HepG2 (cell line): ENCODE measurements at regions of chr7 and their contacts with region 1.

Region 1: GRCh38 chr7:108016841-108017775 is 14.1 kb upstream of the LAMB1 start:
- DNase-seq: peak; percentile 55
- ATAC-seq: peak; percentile 72
- H3K4me3 ChIP-seq: no peak overlapping the region
- H3K27ac ChIP-seq: no peak overlapping the region
- H3K4me1 ChIP-seq: peaks cover 68% of the 10 kb centered on the region
- H3K27me3 ChIP-seq: peaks cover 0 to 7% of the 10 kb centered on the region in 2 experiments; a peak in 3 of 5 replicates
- CTCF ChIP-seq: peak; percentile 66
- EP300 ChIP-seq: no peak
- POLR2A ChIP-seq: no peak
- RAD21 ChIP-seq: no peak

Region 2: GRCh38 chr7:107890962-107891635 is 126.0 kb before region 1 on chr7 and contains the start of gene DLD:
- CTCF ChIA-PET with region 1: no interaction called
- POLR2A ChIA-PET with region 1: no interaction called
- in situ Hi-C with region 1: no loop called
- intact Hi-C with region 1: loop called (anchors 5 kb)
- DNase-seq: peak; percentile 76
- ATAC-seq: peak; percentile 98
- H3K4me3 ChIP-seq: peak within 1 kb of the TSS; percentile 73 to 86 (median 79)
- H3K27ac ChIP-seq: peak within 1 kb of the TSS; percentile 86
- H3K4me1 ChIP-seq: peaks cover 33% of the 10 kb centered on the region
- H3K27me3 ChIP-seq: no peaks in the 10 kb centered on the region; a peak in 1 of 5 replicates
- CTCF ChIP-seq: no peak
- EP300 ChIP-seq: no peak
- POLR2A ChIP-seq: peak; percentile 75 to 85
- RAD21 ChIP-seq: no peak
- total RNA-seq, gene DLD: 95.2 and 128 TPM in 2 replicates

Region 3: GRCh38 chr7:107948645-107949497 is 68.2 kb before region 1 on chr7:
- CTCF ChIA-PET with region 1: no interaction called
- POLR2A ChIA-PET with region 1: interaction called, 3 read pairs
- in situ Hi-C with region 1: no loop called
- intact Hi-C with region 1: loop called (anchors 1 kb)
- DNase-seq: peak; percentile 86
- ATAC-seq: peak; percentile 80
- H3K4me3 ChIP-seq: no peak overlapping the region; a peak in 1 of 6 replicates
- H3K27ac ChIP-seq: peak overlapping the region; percentile 60
- H3K4me1 ChIP-seq: peaks cover 57% of the 10 kb centered on the region
- H3K27me3 ChIP-seq: no peaks in the 10 kb centered on the region
- CTCF ChIP-seq: no peak
- EP300 ChIP-seq: peak in 1 of 2 experiments; percentile 71; a peak in 1 of 4 replicates
- POLR2A ChIP-seq: no peak
- RAD21 ChIP-seq: no peak

Region 4: GRCh38 chr7:107966711-107967110 is 50.4 kb before region 1 on chr7:
- CTCF ChIA-PET with region 1: no interaction called
- POLR2A ChIA-PET with region 1: interaction called, 5 read pairs
- in situ Hi-C with region 1: no loop called
- intact Hi-C with region 1: loop called (anchors 1 kb)
- DNase-seq: peak; percentile 90
- ATAC-seq: peak; percentile 79
- H3K4me3 ChIP-seq: no peak overlapping the region
- H3K27ac ChIP-seq: no peak overlapping the region
- H3K4me1 ChIP-seq: peaks cover 39% of the 10 kb centered on the region
- H3K27me3 ChIP-seq: no peaks in the 10 kb centered on the region
- CTCF ChIP-seq: no peak
- EP300 ChIP-seq: no peak
- POLR2A ChIP-seq: no peak
- RAD21 ChIP-seq: no peak

Region 5: DNA sequence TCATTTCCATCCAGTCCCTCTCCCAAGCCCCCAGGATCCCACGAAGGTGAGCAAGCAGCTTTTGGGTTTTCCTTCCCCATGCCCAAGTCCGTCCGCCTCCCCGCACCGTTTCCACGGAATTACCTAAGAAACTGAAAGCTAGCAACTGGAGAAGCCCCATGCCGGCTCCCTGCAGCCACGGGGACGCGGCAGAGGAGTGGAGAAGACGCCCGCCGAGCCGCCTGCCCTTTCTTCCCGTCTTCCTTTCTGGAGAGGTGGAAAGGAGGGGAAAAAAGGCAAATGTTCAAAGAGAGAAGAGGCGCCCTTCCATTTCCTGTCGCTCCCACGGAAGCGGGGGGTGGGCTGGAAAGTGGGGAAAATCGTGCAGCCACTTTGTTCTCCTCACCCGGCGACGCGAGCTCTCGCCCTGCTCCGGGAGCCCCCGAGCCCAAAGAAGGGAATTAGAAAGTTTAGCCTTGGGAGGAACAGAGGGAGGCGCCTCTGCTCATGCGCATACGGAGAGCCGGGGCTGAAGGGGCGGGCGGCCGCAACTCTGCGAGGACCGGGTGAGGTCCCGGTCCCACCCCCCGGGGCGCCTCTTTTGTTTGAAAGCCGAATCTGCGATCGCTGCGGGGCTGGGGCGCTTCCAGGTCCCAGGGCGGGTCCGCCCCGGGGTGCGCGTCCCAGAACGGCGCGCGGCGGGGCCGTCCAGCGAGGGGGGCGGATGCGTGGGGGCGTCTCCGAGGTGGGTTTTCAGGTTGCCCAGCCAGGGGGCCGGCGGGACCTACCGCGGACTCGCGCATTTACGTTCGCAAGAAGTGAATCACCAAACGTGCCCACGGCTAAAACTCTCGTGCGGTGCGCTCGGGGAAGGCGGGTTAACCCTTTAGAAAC is 14.1 kb before region 1 on chr7 and contains the start of gene LAMB1:
- CTCF ChIA-PET with region 1: no interaction called
- POLR2A ChIA-PET with region 1: interaction called, 49 read pairs
- in situ Hi-C with region 1: no loop called
- intact Hi-C with region 1: loop called (anchors 1 kb)
- DNase-seq: peak; percentile 73
- ATAC-seq: peak; percentile 76
- H3K4me3 ChIP-seq: peak within 1 kb of the TSS; percentile 75 to 93 (median 85)
- H3K27ac ChIP-seq: peak within 1 kb of the TSS; percentile 68
- H3K4me1 ChIP-seq: peaks cover 87% of the 10 kb centered on the region
- H3K27me3 ChIP-seq: no peaks in the 10 kb centered on the region
- CTCF ChIP-seq: no peak; the same call in 1 of the 2 replicates
- EP300 ChIP-seq: no peak
- POLR2A ChIP-seq: peak; percentile 62 to 72
- RAD21 ChIP-seq: no peak
- total RNA-seq, gene LAMB1: 56.4 and 109 TPM in 2 replicates

Region 6: DNA sequence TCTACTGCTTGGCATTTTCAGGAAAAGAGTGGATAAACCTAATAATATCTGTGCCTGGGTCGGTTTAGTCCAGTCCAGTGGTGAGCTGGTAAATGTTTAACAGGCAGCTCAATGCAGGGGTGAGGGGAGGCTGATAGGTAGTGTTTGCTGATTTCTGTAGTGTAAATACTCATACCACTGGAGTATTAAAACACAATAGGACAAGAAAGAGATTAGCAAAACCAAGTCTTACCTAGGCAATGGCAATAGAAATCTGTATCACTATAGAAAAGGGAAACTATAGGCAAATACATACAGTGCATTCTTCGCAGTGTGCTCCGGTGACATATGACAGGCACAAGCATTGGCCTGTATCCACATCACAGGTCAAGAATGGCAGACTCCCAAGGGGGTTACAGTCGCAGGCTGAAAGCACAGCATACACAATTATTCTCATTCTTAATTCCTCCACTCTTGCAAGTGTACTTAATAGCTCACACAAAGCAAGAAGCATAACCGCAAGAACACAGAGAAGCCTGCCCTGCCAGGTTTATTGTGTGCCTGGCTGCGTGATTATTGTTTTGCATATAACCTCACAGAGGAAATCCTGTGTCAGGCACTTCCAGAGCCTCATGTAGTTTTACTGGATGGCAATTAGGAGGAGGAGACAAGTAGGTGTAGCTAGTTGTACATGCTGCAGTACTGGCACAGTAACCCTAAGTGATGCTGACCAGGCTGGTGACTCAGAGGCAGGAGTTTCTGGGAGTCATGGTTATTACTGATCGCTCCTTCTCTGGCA is 78.0 kb after region 1 on chr7:
- CTCF ChIA-PET with region 1: no interaction called
- POLR2A ChIA-PET with region 1: no interaction called
- in situ Hi-C with region 1: no loop called
- intact Hi-C with region 1: loop called (anchors 1 kb)
- DNase-seq: peak; percentile 88
- ATAC-seq: peak; percentile 96
- H3K4me3 ChIP-seq: peak overlapping the region in 1 of 3 experiments; percentile 24; a peak in 1 of 6 replicates
- H3K27ac ChIP-seq: no peak overlapping the region
- H3K4me1 ChIP-seq: peaks cover 49% of the 10 kb centered on the region
- H3K27me3 ChIP-seq: no peaks in the 10 kb centered on the region
- CTCF ChIP-seq: no peak
- EP300 ChIP-seq: peak in 1 of 2 experiments; percentile 56; a peak in 2 of 4 replicates
- POLR2A ChIP-seq: no peak
- RAD21 ChIP-seq: no peak